ENCODE measurements at regions of chr2 and their contacts with region 1.

Region 1: DNA sequence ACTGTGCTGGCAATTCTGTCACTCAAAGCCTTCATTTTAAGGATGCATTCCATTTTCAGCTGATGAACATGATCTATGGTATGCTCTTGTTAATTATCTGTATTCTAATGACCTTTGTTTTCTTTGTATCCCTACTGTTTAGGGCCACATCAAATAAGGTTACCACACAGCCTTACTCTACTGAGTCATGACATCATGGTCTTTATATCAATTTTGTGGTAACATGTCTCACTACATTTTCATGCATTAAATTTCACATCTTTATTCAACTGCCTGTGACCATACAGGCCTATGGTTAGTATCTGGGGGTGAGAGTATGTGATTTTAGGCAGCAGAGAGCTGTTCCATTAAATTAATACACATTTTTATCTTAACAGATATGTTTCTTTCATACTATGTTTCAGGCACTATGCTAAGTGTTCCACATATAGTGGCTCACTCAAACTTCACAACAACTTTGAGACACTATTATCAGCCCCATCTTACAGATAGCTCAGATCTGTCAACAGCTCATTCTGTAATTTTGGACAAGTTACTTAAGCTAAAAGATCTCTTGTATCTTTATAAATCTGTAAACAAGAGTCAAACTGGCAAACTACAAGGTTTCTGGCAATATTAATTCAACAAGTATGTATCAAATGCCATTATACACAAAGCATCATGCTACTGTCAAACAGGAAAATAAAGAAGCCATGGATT is 18.0 kb downstream of the LRPPRC start:
- DNase-seq: no peak
- ATAC-seq: peak; percentile 20; the same call in 2 of the 3 replicates
- H3K4me3 ChIP-seq: no peak overlapping the region
- H3K27ac ChIP-seq: no peak overlapping the region
- H3K4me1 ChIP-seq: no peaks in the 10 kb centered on the region
- H3K27me3 ChIP-seq: no peaks in the 10 kb centered on the region
- CTCF ChIP-seq: no peak
- EP300 ChIP-seq: no peak
- POLR2A ChIP-seq: no peak
- RAD21 ChIP-seq: no peak

Region 2: GRCh38 chr2:43934567-43934966 is 43.3 kb before region 1 on chr2:
- CTCF ChIA-PET with region 1: no interaction called
- POLR2A ChIA-PET with region 1: no interaction called
- in situ Hi-C with region 1: loop called (anchors 5 kb)
- intact Hi-C with region 1: no loop called
- DNase-seq: no peak
- ATAC-seq: no peak
- H3K4me3 ChIP-seq: no peak overlapping the region
- H3K27ac ChIP-seq: no peak overlapping the region
- H3K4me1 ChIP-seq: no peaks in the 10 kb centered on the region
- H3K27me3 ChIP-seq: no peaks in the 10 kb centered on the region
- CTCF ChIP-seq: no peak
- EP300 ChIP-seq: no peak
- POLR2A ChIP-seq: no peak
- RAD21 ChIP-seq: no peak